Brain microvascular endothelial cell (primary cell): ENCODE measurements at regions of chr12 and their contacts with region 1.

Region 1: DNA sequence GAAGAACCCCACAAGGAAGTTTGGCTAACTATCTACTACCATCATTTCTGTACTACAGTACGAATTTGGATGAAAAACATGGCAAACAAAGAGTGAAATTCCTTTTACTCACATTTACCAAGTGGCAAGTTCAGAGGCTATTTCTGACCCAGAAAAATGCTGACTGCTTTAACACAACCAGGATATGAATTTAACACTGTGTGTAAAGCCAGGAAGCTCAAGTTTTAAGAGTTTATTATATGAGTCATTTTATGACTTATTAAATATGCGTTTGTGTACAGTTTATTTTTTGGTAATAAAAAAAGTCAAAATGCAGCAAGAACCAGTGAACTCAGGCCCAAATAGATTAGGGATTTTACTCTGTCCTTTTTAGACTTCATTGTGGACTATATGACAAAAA is 58.4 kb upstream of the STAC3 start:
- DNase-seq: no peak
- H3K4me3 ChIP-seq: no peak overlapping the region
- H3K27ac ChIP-seq: no peak overlapping the region
- H3K27me3 ChIP-seq: no peaks in the 10 kb centered on the region
- CTCF ChIP-seq: no peak

Region 2: DNA sequence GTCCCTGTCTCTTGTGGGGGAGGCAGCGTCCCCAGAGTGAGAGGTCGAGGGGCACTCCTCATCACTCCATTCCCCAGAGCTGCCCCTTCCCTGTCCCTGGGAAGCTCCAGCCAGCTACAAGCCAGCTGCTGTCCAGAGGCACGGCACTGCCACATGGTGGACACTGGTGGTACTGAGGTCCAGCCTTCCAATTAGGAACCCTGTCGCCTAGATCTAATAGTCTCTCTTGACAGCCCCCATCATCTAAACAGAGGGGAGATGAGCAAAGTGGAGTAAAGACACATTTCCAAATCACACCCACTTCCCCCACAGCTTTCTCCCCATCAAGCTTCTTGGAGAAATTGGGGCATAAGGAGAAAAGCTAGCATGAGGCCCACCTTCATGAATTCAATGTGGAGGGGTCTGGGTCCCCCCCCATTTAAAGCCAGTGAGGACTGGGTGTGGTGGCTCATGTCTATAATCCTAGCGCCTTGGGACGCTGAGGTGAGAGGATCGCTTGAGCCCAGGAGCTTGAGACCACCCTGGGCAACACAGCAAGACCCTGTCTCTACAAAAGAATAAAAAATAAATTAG is 143.6 kb after region 1 on chr12:
- in situ Hi-C with region 1: loop called (anchors 5 kb)
- DNase-seq: peak; percentile 81
- H3K4me3 ChIP-seq: no peak overlapping the region
- H3K27ac ChIP-seq: peak overlapping the region; percentile 49
- H3K27me3 ChIP-seq: no peaks in the 10 kb centered on the region
- CTCF ChIP-seq: peak; percentile 98